ENCODE measurements at regions of chr1 and their contacts with region 1.

Region 1: DNA sequence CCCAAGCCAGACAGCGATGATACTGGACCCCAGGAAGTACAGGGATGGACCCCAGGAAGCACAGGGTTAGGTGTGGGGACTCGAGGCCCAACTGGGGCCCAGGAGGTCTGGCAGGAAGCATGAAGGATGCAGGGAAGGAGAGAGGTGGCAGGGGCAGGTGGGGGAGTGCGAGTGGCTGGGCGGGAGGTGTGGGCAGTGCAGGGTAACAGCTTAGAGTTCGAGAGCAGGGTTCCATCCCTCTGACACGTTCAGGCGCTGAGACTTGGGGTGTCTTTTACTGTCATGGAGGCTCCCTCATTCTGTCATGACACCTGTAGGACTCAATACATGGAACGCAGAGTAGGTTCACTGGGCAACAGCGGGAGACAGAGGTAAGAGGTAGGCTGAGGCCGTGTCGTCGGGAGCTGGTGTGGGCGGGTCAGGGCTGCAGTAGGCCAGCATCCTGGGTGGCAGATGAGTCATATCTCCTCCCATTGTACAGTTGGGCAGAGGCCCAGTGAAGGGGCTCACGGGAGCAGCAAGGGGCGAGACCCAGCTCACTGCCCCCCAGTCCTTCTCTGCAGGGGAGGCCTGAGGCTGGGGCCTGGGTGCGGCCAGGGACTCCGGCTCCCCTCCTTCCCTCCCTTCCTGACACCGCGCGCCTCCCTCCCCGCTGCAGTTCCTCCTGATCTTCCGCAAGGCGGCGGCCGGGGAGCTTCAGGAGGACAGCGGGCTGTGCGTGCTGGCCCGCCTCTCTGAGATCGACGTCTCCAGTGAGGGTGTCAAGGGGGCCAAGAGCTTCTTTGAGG is 11.6 kb upstream of the CTRC start:
- DNase-seq: no peak
- H3K4me3 ChIP-seq: no peak overlapping the region
- H3K4me1 ChIP-seq: no peaks in the 10 kb centered on the region
- H3K27me3 ChIP-seq: no peaks in the 10 kb centered on the region

Region 2: DNA sequence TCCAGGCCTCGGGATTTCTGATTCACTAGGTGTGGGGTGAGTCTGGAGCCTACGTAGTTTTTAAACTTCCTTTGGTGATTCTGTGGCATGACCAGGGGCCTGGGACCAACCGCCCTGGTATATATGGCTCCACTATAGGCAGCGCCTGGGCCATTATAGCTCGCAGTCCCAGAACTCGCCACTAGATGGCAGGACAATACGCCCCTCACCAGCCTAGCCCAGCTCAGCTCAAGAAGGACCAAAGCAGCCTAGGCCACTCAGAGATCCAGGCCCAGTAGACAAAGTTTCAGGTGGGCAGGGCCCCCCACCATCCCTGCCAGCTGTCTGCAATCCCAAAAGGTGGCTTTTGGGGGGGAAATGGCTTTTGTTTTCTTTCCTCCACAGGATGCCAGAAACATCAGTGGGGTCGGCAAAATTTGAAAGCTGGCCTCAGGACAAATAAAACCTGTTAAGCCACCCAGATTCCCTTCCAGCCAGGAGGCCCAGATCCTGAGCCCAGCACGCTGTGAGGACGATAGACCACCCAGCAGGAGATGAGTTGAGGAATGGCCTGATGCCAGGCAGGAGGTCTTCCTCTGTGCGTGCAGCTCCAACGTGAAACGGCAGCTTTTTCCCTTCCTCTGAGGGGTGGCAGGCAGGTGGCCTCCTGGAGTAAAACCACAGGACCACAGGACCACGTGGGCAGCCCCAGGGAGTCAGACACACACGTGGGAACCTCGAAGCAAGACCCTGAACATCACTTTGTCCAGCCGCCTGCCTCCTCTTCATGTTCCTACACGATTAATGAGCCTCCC is 298.0 kb before region 1 on chr1:
- in situ Hi-C with region 1: loop called (anchors 10 kb)
- DNase-seq: peak; percentile 50 to 82
- H3K4me3 ChIP-seq: no peak overlapping the region
- H3K4me1 ChIP-seq: no peaks in the 10 kb centered on the region
- H3K27me3 ChIP-seq: no peaks in the 10 kb centered on the region

Region 3: DNA sequence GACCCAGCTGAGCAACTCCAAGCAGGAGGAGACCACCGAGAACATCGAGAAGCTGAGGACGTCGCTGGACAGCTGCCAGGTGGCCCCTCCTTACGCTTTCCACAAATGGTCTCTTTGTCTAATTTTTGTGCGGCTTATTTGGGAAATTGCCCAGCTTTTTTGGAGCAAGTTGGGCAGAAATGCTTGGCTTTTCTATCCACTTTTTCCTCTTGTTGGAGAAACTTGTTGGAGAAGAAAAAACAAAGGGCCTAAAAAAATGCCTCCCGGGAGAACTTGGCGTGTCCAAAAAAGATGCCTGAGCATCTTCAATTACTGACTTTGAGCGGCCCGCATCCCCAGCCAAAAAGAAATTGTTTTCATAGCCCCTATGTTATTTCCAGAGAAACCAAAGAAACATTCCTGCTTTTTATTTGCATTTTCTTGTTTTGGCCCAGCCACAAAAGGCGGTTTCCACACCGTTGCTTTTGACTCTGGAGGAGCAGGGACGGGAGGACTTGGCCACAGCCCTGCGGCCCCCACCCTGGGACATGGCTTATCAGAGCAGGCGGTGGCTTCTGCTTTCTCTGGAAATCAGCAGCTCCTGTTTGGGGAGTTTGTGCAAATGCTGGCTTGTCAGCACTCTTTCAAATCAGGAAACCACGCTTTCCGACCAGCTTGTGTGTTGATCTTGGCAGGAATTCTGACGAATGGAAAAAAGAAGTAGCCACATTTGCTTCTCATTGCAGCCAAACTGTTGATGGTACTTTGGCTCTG is 98.2 kb before region 1 on chr1:
- in situ Hi-C with region 1: loop called (anchors 5 kb)
- DNase-seq: no peak
- H3K4me3 ChIP-seq: no peak overlapping the region
- H3K4me1 ChIP-seq: no peaks in the 10 kb centered on the region
- H3K27me3 ChIP-seq: no peaks in the 10 kb centered on the region

Region 4: GRCh38 chr1:15617175-15617880 is 190.6 kb after region 1 on chr1 and contains the start of gene DDI2:
- in situ Hi-C with region 1: no loop called
- DNase-seq: peak; percentile 99
- H3K4me3 ChIP-seq: peak within 1 kb of the TSS; percentile 77
- H3K4me1 ChIP-seq: peaks cover 18% of the 10 kb centered on the region
- H3K27me3 ChIP-seq: no peaks in the 10 kb centered on the region